Sciatic nerve (tissue), 2 donors: ENCODE measurements at regions of chr1 and their contacts with region 1.

Region 1: GRCh38 chr1:39701049-39701439 is 9.8 kb upstream of the HPCAL4 start:
- DNase-seq: no peak
- ATAC-seq: peak; percentile 57

Region 2: DNA sequence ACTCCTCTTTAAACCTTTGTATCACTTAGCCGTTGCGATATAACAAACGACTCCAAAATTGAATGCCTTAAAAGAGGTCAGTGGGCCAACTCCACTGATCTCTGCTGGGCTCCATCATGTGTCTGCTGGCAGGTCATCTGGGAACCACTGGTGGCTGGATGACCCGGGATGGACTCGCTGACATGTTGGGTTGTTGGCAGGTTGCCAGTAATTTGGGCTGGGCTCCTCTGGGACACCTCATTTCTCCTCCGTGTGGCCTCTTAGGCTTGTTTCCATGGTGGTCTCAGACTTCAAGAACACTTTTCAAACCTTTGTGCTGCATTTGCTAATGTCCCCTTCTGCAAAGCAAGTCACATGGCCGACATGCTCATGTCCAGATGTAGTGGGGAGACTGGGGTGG is 1515.1 kb before region 1 on chr1:
- intact Hi-C with region 1: loop called (anchors 5 kb)
- DNase-seq: no peak
- ATAC-seq: no peak

Region 3: DNA sequence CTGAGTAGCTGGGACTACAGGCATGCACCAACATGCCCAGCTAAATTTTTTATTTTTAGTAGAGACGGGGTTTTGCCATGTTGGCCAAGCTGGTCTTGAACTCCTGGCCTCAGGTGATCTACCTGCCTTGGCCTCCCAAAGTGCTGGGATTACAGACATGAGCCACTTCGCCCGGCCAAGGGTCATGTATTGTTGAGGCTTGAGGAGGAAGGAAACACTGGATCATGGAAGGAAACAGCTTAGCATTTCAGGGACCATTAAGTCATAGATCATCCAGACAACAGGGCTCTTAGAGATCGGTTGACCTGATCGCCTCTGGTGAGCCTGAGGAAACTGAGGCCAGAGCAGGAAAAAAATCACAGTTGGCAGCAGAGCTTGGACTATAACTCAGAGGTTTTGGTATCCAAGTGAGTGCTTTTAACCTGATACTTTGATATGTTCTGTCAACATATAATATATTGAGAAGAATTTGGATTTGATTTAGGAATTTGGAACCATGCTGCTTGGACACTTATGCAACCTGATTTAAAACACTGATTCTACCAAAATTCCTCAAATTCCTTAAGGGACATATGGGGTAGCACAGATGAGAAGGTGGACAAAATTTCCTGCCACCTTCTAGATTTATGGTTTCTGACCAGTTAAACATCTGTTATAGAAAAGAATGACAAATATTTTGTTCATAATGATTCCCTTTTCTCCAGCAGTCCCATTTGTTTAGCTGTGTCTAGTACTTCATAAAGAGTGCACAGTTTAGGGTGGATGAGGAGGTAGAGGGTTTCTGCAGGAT is 222.7 kb before region 1 on chr1:
- intact Hi-C with region 1: no loop called
- DNase-seq: no peak
- ATAC-seq: no peak

Region 4: DNA sequence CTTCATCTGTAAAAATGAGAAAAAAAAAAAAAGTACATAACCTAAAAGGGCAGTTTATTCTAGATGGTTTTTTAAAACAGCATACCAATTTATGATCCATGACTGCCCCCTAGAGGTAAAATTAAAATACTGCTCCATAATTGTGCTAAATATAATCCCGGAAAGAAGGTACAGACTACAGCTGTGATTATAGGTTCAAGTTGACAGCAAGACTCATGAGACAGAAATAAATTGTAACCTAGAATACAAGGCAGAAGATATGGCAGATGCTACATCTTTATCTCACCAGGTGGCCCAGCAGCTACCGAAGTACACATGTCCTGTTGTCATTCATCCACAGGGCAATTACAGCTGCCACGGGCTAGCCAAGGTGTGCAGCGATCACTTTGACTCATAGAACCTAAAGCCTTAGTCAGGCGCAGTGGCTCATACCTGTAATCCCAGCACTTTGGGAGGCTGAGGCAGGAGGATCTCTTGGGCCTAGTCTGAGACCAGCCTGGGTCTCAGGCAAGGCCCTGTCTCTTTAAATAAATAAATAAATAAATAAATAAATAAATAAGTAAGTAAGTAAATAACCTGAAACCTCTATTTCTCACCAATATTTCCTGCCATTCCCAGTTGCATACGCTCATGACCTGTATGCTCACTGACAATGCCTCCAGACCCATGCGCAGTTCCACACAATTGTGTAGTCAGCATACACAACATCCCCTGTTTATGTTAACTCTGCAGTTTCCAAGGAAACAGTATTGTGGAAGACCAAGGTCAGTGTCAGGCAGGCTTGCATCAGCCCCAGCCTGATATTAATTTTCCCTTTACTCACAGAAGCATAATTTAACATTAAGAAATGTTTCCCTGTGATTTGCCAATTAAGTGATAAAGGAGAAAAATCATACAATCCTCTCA is 19.3 kb after region 1 on chr1:
- intact Hi-C with region 1: no loop called
- DNase-seq: no peak
- ATAC-seq: no peak

Region 5: DNA sequence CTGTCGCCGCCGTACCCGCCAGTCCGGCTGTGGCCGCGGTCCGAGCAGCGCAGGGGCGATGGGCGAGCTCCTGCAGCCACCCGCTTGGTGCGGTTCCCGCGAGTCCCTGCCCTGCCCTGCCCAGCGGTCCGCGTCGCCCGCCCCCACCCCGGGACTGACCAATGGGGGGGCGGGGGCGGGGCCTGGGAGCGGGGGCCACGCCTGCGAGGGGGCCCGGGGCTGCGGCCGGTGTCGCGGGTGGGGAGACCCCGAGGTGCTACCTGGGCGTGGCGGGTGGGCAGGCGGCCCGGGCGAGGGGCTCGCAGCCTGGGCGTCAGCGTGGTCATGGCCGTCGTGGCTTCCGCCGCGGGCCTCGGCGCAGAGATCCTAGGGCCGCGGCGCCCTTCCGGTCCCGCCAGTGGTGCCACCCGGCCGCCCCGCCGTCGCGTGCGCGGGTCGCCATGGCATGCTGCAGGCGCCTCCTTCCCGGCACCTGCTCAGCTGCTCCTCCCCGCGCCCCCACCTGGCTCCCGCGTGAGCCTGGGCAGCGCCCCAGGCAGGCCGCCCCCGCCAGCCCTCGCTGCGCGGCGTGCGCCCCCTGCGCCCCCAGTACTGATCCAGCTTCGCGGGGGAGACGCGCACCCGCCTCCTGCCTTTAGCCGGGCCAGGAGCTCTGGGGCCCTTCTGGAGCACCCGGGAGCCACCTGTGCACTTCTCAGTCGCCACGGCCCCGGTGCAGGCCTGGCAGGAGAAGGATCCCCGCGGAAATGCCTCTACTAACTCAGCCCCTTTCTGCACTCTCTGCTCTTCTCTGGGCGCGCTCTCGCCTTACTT is 87.9 kb after region 1 on chr1 and contains the start of gene BMP8B:
- intact Hi-C with region 1: no loop called
- DNase-seq: peak; percentile 81
- ATAC-seq: peak; percentile 62
- total RNA-seq, gene BMP8B: 40.2 TPM

Region 6: DNA sequence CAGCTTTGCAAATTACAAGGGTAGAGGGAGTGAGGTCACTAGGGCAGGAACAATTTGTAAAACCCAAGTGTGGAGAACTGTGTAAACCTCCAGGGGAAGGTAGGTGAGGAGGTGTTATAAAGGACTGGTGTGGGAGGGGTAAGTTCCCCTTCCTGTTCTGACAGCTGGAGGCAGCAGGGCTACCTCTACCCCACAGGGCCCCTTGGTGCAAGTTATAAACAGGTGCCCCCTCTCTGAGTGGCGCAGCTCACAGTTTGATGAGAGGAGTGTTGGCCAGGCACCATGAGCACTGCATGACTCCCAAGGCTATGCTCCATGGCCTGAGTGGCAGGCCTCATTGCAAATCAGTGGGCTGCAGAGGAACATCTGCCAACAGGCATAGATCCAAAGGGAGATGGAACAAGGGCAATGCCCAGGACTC is 294.9 kb after region 1 on chr1:
- intact Hi-C with region 1: no loop called
- DNase-seq: no peak
- ATAC-seq: no peak